ENCODE measurements at regions of chr13 and their contacts with region 1.

Region 1: DNA sequence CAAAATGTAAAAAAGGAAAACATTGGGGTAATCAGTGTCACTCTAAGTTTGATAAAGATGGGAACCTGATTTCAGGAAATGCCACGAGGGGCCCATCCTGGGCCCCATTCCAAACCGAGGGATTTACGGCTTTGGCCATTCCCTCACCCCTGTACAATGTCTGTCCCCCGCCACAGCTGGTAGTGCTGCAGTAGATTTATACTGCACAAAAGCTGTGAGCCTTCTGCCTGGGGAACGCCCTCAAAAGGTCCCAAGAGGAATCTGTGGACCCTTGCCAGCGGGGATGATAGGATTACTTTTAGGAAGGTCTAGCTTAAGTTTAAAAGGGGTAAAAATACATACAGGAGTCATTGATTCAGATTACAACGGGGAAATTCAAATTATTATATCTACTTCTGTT is 173.4 kb upstream of the SGCG start:
- DNase-seq: no peak
- ATAC-seq: no peak
- H3K4me3 ChIP-seq: no peak overlapping the region
- H3K4me3 Mint-ChIP-seq: no peak overlapping the region
- H3K27ac ChIP-seq: no peak overlapping the region
- H3K27ac Mint-ChIP-seq: no peak overlapping the region
- H3K4me1 ChIP-seq: no peaks in the 10 kb centered on the region
- H3K4me1 Mint-ChIP-seq: no peaks in the 10 kb centered on the region
- H3K27me3 ChIP-seq: no peaks in the 10 kb centered on the region
- H3K27me3 Mint-ChIP-seq: peaks cover 5% of the 10 kb centered on the region
- CTCF ChIP-seq: no peak

Region 2: DNA sequence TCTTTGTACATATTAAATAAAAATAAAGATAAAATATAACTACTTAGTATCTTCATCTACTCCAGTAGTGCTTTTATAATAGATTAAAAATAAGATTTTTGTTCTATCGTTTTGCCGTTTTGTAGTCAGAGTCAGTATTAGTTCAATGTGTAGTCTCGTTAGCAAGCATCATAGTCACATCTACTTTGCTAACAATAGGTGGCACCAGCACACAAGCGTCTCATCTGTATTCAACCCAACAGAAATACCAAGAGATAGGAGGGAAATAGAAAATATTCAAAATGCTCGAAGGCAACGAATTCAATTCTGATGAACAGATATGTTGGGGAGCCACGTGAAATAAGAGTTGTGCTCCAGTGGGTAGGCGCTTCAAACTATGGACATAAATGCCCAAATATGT is 1382.1 kb before region 1 on chr13:
- CTCF ChIA-PET with region 1: no interaction called
- POLR2A ChIA-PET with region 1: no interaction called
- intact Hi-C with region 1: loop called in 1 of 2 experiments (anchors 5 kb)
- DNase-seq: peak in 5 of 14 experiments; percentile 11 to 55 (median 40)
- ATAC-seq: peak; percentile 39
- H3K4me3 ChIP-seq: no peak overlapping the region
- H3K4me3 Mint-ChIP-seq: no peak overlapping the region
- H3K27ac ChIP-seq: no peak overlapping the region
- H3K27ac Mint-ChIP-seq: no peak overlapping the region
- H3K4me1 ChIP-seq: no peaks in the 10 kb centered on the region
- H3K4me1 Mint-ChIP-seq: no peaks in the 10 kb centered on the region
- H3K27me3 ChIP-seq: no peaks in the 10 kb centered on the region
- H3K27me3 Mint-ChIP-seq: peaks cover 11% of the 10 kb centered on the region
- CTCF ChIP-seq: peak; percentile 62

Region 3: DNA sequence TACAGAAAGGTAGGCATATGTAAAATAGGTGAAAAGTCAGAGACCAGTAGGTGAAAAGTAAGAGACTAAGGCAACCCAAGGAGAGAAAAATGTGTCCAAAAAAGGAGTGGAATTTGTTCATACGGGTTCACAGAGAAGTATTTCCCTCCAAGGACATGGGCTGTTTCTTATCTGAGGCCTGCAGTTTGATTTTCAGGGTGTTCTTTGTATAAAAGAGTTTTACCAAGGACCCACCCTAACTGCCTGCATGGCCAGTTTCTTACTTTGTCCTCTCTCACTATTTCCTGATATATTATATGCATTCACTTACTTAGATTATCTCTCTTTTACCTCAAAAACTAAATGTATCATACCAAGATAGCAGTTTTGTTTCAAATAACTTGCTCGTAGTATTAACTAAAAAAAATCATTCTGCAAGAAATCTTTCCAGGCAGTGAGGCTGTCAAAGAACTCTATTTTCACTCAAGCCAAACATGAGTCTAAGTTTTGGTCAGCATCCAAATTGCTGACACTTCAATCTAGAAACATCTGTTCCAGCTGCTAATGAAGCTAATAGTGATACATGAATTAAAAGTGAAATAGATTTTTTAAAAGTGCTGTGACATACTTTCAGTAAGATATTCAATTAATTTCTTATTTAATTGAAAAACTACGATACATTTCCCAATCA is 32.0 kb after region 1 on chr13:
- CTCF ChIA-PET with region 1: no interaction called
- POLR2A ChIA-PET with region 1: no interaction called
- intact Hi-C with region 1: no loop called
- DNase-seq: no peak
- ATAC-seq: no peak
- H3K4me3 ChIP-seq: no peak overlapping the region
- H3K4me3 Mint-ChIP-seq: no peak overlapping the region
- H3K27ac ChIP-seq: no peak overlapping the region
- H3K27ac Mint-ChIP-seq: no peak overlapping the region
- H3K4me1 ChIP-seq: no peaks in the 10 kb centered on the region
- H3K4me1 Mint-ChIP-seq: no peaks in the 10 kb centered on the region
- H3K27me3 ChIP-seq: no peaks in the 10 kb centered on the region
- H3K27me3 Mint-ChIP-seq: no peaks in the 10 kb centered on the region
- CTCF ChIP-seq: no peak

Measured in CD4-positive, alpha-beta T cell (primary cell).